WTC11 (cell line): ENCODE measurements at regions of chr9 and their contacts with region 1.

Region 1: DNA sequence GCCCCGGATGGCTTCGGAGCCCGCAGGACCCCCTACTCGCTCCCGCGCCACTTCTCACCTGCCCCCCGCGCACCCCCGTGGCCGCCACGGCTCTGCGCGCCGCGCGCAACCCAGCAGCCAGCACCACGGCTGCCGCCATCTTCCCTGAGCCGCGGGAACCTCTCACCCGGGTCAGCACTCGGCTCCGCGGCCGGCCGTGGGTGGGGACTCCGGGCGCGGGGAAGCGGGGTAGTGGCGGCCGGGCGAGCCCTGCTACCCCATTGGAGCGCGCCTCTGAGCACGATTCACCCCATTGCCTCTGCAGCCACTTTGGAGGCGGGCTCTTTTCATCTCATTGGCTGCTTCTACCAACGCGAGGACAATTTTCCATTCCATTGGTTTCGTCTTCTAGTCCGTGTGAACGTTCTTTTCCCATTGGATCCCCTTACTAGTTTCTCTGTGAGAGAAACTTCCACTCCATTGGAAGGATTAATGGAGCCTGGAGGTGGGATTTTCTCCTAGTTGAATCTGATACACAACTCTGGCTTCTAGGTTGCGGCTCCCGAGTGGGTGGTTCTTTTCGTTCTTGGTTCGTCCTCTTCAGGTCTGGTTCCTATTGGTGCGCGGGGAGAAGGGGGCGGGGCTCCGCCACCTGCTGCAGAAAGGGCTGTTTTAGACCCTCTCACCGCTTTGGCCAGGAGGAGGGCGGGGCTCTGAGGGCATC is at the start of gene HINT2:
- DNase-seq: peak; percentile 99
- ATAC-seq: peak; percentile 80
- H3K4me3 Mint-ChIP-seq: peak within 1 kb of the TSS; percentile 91
- H3K27ac Mint-ChIP-seq: peak within 1 kb of the TSS; percentile 100
- H3K4me1 Mint-ChIP-seq: peaks cover 27% of the 10 kb centered on the region
- H3K27me3 Mint-ChIP-seq: peaks cover 11% of the 10 kb centered on the region
- CTCF ChIP-seq: no peak
- total RNA-seq, gene HINT2: 33.6 to 42.7 TPM (median 42.1 TPM) in 3 replicates

Region 2: GRCh38 chr9:35563791-35564197 is 251.2 kb before region 1 on chr9:
- CTCF ChIA-PET with region 1: no interaction called
- POLR2A ChIA-PET with region 1: no interaction called
- DNase-seq: peak; percentile 52
- ATAC-seq: peak; percentile 88
- H3K4me3 Mint-ChIP-seq: no peak overlapping the region
- H3K27ac Mint-ChIP-seq: peak overlapping the region; percentile 60; the same call in 1 of the 2 replicates
- H3K4me1 Mint-ChIP-seq: peaks cover 9% of the 10 kb centered on the region
- H3K27me3 Mint-ChIP-seq: no peaks in the 10 kb centered on the region; the same call in 1 of the 2 replicates
- CTCF ChIP-seq: no peak

Region 3: DNA sequence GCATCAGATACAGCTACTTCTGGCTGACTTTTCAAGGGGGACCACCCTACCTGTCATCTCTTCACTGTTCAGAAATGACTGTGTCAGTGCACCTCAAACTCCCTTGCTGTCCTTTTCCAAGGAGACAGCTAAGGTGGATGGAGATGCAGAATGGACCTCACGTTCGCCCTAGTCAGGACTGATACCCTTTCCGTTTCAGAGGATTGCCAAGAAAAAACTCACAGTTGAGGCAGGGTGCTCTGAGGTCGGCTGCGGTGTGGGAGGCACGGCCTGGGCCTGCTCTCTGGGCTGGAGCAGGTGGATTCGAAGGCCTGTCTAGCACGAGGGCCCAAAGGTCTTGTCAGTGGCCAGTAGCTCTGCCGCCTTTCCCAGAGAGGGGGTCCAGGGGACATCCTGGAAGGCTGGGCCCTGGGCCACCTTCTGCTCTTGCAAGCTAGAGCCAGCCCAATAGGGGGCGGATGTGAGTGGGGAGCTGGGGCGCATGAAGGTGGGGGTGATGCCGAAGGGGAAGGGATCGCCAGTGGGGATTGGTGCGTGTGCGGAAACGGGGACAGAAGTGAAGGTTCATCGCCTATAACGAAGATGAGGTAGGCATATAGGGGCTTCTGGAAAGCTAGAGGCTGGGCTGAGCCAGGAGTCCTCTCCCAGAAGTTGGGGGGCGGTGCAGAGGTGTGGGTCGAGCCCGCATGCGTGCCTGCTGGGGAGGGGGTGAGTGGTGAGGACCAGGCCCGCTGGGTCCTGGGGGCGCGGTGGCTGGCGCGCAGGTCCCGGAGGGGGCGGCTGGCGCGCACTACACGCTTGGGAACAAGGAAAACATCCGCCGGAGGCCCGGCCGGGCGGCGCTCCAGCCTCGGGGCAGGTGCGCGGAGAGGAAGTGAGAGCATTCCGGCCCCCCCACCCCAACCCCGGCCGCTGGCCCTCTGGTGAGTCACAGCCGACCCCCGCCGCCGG is 58.4 kb before region 1 on chr9:
- CTCF ChIA-PET with region 1: interaction called, 11 read pairs
- POLR2A ChIA-PET with region 1: no interaction called
- DNase-seq: peak; percentile 82
- ATAC-seq: peak; percentile 79
- H3K4me3 Mint-ChIP-seq: peak overlapping the region; percentile 89
- H3K27ac Mint-ChIP-seq: peak overlapping the region; percentile 93
- H3K4me1 Mint-ChIP-seq: peaks cover 26% of the 10 kb centered on the region
- H3K27me3 Mint-ChIP-seq: no peaks in the 10 kb centered on the region
- CTCF ChIP-seq: 0 out of 2 replicates have a peak, but pooled peaks have one; percentile 18

Region 4: GRCh38 chr9:35766997-35767396 is 48.0 kb before region 1 on chr9:
- CTCF ChIA-PET with region 1: no interaction called
- POLR2A ChIA-PET with region 1: no interaction called
- DNase-seq: no peak
- ATAC-seq: no peak
- H3K4me3 Mint-ChIP-seq: no peak overlapping the region
- H3K27ac Mint-ChIP-seq: no peak overlapping the region
- H3K4me1 Mint-ChIP-seq: peaks cover 9% of the 10 kb centered on the region
- H3K27me3 Mint-ChIP-seq: no peaks in the 10 kb centered on the region
- CTCF ChIP-seq: no peak

Region 5: DNA sequence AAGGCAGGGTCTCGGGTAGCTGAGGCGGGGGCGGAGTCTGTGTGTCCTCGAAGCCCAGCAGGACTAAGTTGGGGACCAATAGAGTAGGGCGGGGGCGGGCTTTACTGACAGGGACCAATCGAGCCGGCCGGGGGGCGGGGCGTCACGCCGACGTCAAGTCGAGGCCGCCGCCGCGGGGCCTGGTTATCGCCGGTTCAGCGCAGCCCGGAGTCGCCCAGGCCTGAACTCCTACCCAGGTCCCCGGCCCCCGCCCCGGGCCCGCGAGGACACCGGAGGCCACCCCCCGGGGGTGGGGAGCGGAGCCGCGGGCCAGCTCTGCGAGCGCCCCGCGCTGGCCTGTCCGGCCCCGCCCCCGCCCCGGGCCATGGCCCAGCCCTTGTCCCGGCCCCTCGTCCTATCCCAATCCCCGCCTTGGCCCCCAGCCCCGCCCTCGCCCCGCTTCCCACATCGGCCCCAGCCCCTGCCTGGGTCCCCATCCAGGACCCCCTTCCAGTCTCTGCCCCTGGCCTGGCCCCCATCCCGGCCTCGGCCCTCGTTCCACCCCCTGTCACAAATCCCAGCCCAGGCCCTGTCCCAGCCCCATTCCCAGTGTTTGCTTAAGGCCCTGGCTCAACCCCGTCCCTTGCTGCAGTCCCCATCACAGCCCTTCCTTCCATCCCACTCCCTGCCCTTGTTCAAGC is 14.2 kb after region 1 on chr9 and contains the start of gene TMEM8B:
- CTCF ChIA-PET with region 1: interaction called, 55 read pairs
- POLR2A ChIA-PET with region 1: interaction called, 3 read pairs
- DNase-seq: peak; percentile 97
- ATAC-seq: peak; percentile 91
- H3K4me3 Mint-ChIP-seq: peak within 1 kb of the TSS; percentile 75
- H3K27ac Mint-ChIP-seq: peak within 1 kb of the TSS; percentile 77
- H3K4me1 Mint-ChIP-seq: peaks cover 21% of the 10 kb centered on the region
- H3K27me3 Mint-ChIP-seq: peaks cover 2% of the 10 kb centered on the region; the same call in 1 of the 2 replicates
- CTCF ChIP-seq: no peak
- total RNA-seq, gene TMEM8B: 9.5 to 10.8 TPM (median 10.2 TPM) in 3 replicates